ENCODE measurements at regions of chr1 and their contacts with region 1.

Region 1: GRCh38 chr1:179809506-179810366 is 66.6 kb downstream of the FAM163A start:
- DNase-seq: peak; percentile 75
- H3K4me3 ChIP-seq: no peak overlapping the region
- H3K27ac ChIP-seq: no peak overlapping the region
- H3K4me1 ChIP-seq: no peaks in the 10 kb centered on the region
- H3K27me3 ChIP-seq: peaks cover 2 to 10% of the 10 kb centered on the region in 2 experiments
- CTCF ChIP-seq: peak; percentile 84 to 90
- POLR2A ChIP-seq: no peak

Region 2: GRCh38 chr1:179081687-179082332 is 727.9 kb before region 1 on chr1 and contains the start of gene TOR3A:
- CTCF ChIA-PET with region 1: interaction called, 3 read pairs
- POLR2A ChIA-PET with region 1: no interaction called
- dilution Hi-C with region 1: no loop called
- intact Hi-C with region 1: loop called (anchors 5 kb)
- DNase-seq: peak; percentile 89
- H3K4me3 ChIP-seq: peak within 1 kb of the TSS; percentile 68 to 80 (median 77)
- H3K27ac ChIP-seq: peak within 1 kb of the TSS; percentile 62
- H3K4me1 ChIP-seq: peaks cover 14% of the 10 kb centered on the region
- H3K27me3 ChIP-seq: no peaks in the 10 kb centered on the region
- CTCF ChIP-seq: no peak
- POLR2A ChIP-seq: peak; percentile 88
- total RNA-seq, gene TOR3A: 16.7 and 22.4 TPM in 2 replicates

Region 3: GRCh38 chr1:179663810-179664209 is 145.9 kb before region 1 on chr1:
- CTCF ChIA-PET with region 1: interaction called, 20 read pairs
- POLR2A ChIA-PET with region 1: interaction called, 3 read pairs
- dilution Hi-C with region 1: no loop called
- intact Hi-C with region 1: loop called (anchors 1 kb)
- DNase-seq: peak; percentile 96
- H3K4me3 ChIP-seq: no peak overlapping the region
- H3K27ac ChIP-seq: peak overlapping the region; percentile 84
- H3K4me1 ChIP-seq: peaks cover 13% of the 10 kb centered on the region
- H3K27me3 ChIP-seq: peaks cover 0 to 2% of the 10 kb centered on the region in 2 experiments
- CTCF ChIP-seq: no peak
- POLR2A ChIP-seq: no peak

Region 4: GRCh38 chr1:179742717-179743678 is 66.7 kb before region 1 on chr1 and contains the start of gene FAM163A:
- CTCF ChIA-PET with region 1: interaction called, 15 read pairs
- POLR2A ChIA-PET with region 1: no interaction called
- dilution Hi-C with region 1: no loop called
- intact Hi-C with region 1: no loop called
- DNase-seq: no peak
- H3K4me3 ChIP-seq: peak within 1 kb of the TSS in 1 of 3 experiments; percentile 3
- H3K27ac ChIP-seq: no peak within 1 kb of the TSS
- H3K4me1 ChIP-seq: no peaks in the 10 kb centered on the region
- H3K27me3 ChIP-seq: peaks cover 54 to 90% of the 10 kb centered on the region in 2 experiments
- CTCF ChIP-seq: no peak
- POLR2A ChIP-seq: no peak
- total RNA-seq, gene FAM163A: not detected in 2 replicates

Region 5: DNA sequence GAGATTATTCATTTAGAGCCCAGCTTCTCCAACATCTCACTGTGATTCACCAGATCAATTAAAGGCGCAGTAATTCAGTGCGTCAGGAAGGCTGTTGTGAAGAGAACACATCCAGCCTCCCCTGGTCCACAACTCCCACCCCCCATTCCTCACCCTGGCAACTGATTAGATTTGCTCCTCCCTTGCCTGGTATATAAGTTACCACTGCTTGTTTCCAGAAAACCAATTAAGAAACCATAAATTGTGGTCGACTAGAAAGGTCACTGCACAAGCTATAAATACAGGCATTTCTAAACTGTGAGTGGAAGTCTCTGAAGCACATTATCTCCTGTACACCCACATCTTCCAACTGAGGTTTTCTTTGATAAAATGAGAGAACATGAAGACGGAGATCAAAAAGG is 24.7 kb before region 1 on chr1:
- CTCF ChIA-PET with region 1: interaction called, 28 read pairs
- POLR2A ChIA-PET with region 1: no interaction called
- dilution Hi-C with region 1: no loop called
- intact Hi-C with region 1: no loop called
- DNase-seq: no peak
- H3K4me3 ChIP-seq: no peak overlapping the region
- H3K27ac ChIP-seq: no peak overlapping the region
- H3K4me1 ChIP-seq: no peaks in the 10 kb centered on the region
- H3K27me3 ChIP-seq: peaks cover 6 to 9% of the 10 kb centered on the region in 2 experiments
- CTCF ChIP-seq: no peak
- POLR2A ChIP-seq: no peak

Region 6: GRCh38 chr1:179831852-179832699 is 22.3 kb after region 1 on chr1:
- CTCF ChIA-PET with region 1: interaction called, 96 read pairs
- POLR2A ChIA-PET with region 1: no interaction called
- dilution Hi-C with region 1: no loop called
- intact Hi-C with region 1: no loop called
- DNase-seq: no peak
- H3K4me3 ChIP-seq: no peak overlapping the region
- H3K27ac ChIP-seq: no peak overlapping the region
- H3K4me1 ChIP-seq: no peaks in the 10 kb centered on the region
- H3K27me3 ChIP-seq: peaks cover 0 to 6% of the 10 kb centered on the region in 2 experiments
- CTCF ChIP-seq: no peak
- POLR2A ChIP-seq: no peak

Region 7: DNA sequence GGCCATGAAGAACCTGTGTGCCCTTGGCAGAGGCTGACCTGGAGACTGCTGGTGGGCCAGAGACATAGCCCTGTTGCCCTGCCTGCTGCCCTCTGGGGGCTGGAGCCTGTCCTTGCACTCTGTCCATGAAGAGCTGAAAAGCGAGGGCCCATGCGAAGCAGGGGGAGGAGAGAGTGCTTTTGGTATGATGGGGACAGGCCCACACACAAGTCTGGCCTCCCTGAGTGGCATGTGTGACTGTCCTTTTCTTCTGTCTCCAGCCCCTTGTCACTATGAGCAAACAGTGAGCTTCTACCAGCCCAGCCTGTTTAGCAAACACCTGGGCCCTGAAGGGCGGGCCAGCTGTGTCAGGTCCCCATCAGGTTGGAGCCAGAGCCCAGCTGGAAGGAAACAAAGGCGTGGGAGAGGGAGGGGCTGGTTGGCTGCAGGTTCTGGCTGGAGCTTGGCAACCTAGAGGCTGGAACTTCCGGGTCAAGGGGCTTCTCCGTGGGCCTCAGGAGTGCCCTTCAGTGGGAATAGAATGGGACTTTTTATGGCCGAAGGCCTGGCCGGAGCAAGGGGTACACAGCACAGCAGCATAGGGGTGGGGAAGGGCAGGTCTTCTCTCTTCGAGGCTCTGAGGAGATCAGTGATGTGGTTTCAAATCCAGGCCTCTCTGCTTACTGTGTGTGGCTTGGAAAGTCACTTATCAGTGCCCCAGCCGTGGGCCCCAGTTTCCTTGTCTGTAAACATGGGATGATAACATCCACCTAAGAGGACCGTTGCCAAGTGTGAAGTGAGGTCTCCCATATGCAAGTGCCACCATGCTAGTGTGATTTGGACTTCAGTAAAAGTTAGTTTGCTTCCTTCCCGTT is 359.3 kb after region 1 on chr1:
- CTCF ChIA-PET with region 1: interaction called, 15 read pairs
- POLR2A ChIA-PET with region 1: no interaction called
- dilution Hi-C with region 1: no loop called
- intact Hi-C with region 1: no loop called
- DNase-seq: peak; percentile 51
- H3K4me3 ChIP-seq: no peak overlapping the region
- H3K27ac ChIP-seq: no peak overlapping the region
- H3K4me1 ChIP-seq: no peaks in the 10 kb centered on the region
- H3K27me3 ChIP-seq: no peaks in the 10 kb centered on the region
- CTCF ChIP-seq: peak; percentile 63 to 81
- POLR2A ChIP-seq: no peak